ENCODE measurements at regions of chr19 and their contacts with region 1.

Region 1: GRCh38 chr19:48255376-48256303 is at the start of gene CARD8:
- DNase-seq: peak; percentile 89
- ATAC-seq: peak; percentile 87
- H3K4me3 Mint-ChIP-seq: peak within 1 kb of the TSS; percentile 89
- H3K27ac Mint-ChIP-seq: peak within 1 kb of the TSS; percentile 100
- H3K4me1 Mint-ChIP-seq: peaks cover 59% of the 10 kb centered on the region
- H3K27me3 Mint-ChIP-seq: no peaks in the 10 kb centered on the region
- CTCF ChIP-seq: no peak
- total RNA-seq, gene CARD8: 109 TPM

Region 2: GRCh38 chr19:48117515-48118130 is 138.0 kb before region 1 on chr19:
- CTCF ChIA-PET with region 1: no interaction called
- POLR2A ChIA-PET with region 1: no interaction called
- intact Hi-C with region 1: no loop called
- DNase-seq: no peak
- ATAC-seq: no peak
- H3K4me3 Mint-ChIP-seq: no peak overlapping the region
- H3K27ac Mint-ChIP-seq: peak overlapping the region; percentile 80
- H3K4me1 Mint-ChIP-seq: peaks cover 15% of the 10 kb centered on the region
- H3K27me3 Mint-ChIP-seq: no peaks in the 10 kb centered on the region
- CTCF ChIP-seq: no peak

Region 3: DNA sequence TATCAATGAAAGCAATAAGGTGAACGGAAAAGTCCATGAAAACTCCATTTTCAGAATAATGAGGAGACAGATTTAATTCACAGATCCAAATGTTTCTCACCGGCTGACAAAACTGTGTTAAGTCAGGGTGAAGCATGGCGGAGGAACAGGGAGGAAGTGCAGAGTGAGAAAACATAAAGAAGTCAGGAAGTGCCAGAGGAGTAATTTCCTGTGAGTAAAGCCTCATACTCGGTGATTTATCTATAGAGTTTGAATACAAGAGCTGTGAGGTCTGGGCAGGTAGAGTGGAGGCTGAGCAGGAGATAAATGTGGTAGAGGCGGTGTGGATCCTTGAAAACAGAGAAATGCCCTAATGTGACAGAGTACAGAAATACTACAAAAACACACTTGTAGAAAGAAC is 11.4 kb before region 1 on chr19:
- CTCF ChIA-PET with region 1: interaction called, 10 read pairs
- POLR2A ChIA-PET with region 1: interaction called, 18 read pairs
- intact Hi-C with region 1: no loop called
- DNase-seq: peak; percentile 60
- ATAC-seq: peak; percentile 88
- H3K4me3 Mint-ChIP-seq: peak overlapping the region; percentile 70
- H3K27ac Mint-ChIP-seq: peak overlapping the region; percentile 92
- H3K4me1 Mint-ChIP-seq: peaks cover 54% of the 10 kb centered on the region
- H3K27me3 Mint-ChIP-seq: no peaks in the 10 kb centered on the region
- CTCF ChIP-seq: no peak